Aorta (tissue), 5 donors: ENCODE measurements at regions of chr20 and their contacts with region 1.

Region 1: DNA sequence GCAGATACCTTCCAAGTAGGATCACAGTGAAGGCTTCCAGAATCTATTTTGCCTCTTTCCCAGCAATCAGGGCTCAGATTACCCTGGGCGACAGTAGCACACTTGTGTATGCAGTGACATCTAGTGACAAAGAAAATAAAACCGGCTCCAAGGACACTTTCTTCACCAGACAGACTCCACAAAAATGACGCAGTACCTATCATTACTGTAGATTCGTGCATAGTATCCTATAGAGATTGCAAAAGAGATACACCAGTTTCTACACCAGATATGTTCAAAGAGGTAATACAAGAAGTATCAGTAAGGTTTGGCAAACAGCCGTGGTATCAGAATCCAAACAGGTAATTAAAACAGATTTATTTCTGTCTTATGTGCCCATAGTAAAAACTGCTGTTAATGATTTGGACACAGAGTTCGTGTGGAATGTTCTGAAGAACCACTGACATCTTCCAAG is 600.4 kb upstream of the JAG1 start:
- DNase-seq: peak in 1 of 2 donors; percentile 48
- ATAC-seq: peak; percentile 86
- H3K4me3 ChIP-seq: no peak overlapping the region
- H3K27ac ChIP-seq: no peak overlapping the region
- H3K4me1 ChIP-seq: peaks cover 0 to 2% of the 10 kb centered on the region in 2 donors
- H3K27me3 ChIP-seq: no peaks in the 10 kb centered on the region

Region 2: GRCh38 chr20:10902576-10903282 is 371.4 kb before region 1 on chr20:
- intact Hi-C with region 1: loop called in 1 of 2 experiments (anchors 10 kb)
- DNase-seq: no peak
- ATAC-seq: peak; percentile 75
- H3K4me3 ChIP-seq: no peak overlapping the region
- H3K27ac ChIP-seq: no peak overlapping the region
- H3K4me1 ChIP-seq: no peaks in the 10 kb centered on the region
- H3K27me3 ChIP-seq: no peaks in the 10 kb centered on the region